HEK293 (cell line): ENCODE measurements at regions of chr12 and their contacts with region 1.

Region 1: DNA sequence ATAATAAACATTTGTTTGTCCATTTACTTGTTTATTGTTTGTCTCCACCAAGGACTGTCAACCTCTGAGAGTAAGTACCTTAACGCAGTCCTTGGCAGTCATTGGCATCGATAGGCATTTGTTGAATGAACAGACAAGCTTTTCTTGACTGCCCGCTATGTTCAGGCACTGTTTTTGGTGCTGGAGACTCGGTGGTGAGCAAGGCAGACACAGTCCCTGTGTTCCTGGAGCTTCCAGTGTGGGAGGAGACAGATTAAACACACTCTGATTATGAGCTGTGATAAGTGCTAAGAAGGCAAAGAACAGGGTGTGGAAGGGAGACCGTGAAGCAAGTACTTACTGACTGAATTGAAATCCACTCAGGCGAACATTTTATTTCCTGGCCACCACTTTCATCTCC is 1.2 kb downstream of the ATP6V0A2 start:
- H3K4me3 ChIP-seq: peak overlapping the region; percentile 98
- H3K27ac ChIP-seq: no peak overlapping the region
- H3K4me1 ChIP-seq: peaks cover 11% of the 10 kb centered on the region
- CTCF ChIP-seq: no peak

Region 2: DNA sequence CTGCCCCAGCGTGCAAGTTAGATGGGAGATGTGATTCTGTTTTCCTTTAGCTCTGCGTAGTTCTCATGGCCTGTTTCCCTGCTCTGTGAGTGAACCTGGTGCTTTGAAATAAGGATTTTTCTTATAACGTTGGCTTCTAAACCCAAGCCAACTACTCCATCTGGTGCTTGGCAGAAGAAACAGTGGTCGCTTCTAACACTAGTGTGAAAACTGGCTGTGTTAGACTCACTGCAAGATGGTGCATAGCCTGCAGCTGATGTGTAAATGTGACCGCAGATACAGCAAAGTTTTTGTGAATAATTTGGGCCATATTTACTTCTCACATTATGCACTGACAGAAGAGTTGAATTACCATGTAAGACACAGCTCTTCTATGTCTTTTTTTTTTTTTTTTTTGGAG is 67.5 kb before region 1 on chr12:
- CTCF ChIA-PET with region 1: no interaction called
- POLR2A ChIA-PET with region 1: no interaction called
- H3K4me3 ChIP-seq: no peak overlapping the region
- H3K27ac ChIP-seq: no peak overlapping the region
- H3K4me1 ChIP-seq: no peaks in the 10 kb centered on the region
- CTCF ChIP-seq: no peak

Region 3: GRCh38 chr12:123670882-123671728 is 42.3 kb before region 1 on chr12 and contains the start of gene TCTN2:
- CTCF ChIA-PET with region 1: interaction called, 3 read pairs
- POLR2A ChIA-PET with region 1: interaction called, 15 read pairs
- H3K4me3 ChIP-seq: peak within 1 kb of the TSS; percentile 80
- H3K27ac ChIP-seq: no peak within 1 kb of the TSS; the same call in 1 of the 2 replicates
- H3K4me1 ChIP-seq: no peaks in the 10 kb centered on the region
- CTCF ChIP-seq: no peak